ENCODE measurements at regions of chr5 and their contacts with region 1.

Region 1: DNA sequence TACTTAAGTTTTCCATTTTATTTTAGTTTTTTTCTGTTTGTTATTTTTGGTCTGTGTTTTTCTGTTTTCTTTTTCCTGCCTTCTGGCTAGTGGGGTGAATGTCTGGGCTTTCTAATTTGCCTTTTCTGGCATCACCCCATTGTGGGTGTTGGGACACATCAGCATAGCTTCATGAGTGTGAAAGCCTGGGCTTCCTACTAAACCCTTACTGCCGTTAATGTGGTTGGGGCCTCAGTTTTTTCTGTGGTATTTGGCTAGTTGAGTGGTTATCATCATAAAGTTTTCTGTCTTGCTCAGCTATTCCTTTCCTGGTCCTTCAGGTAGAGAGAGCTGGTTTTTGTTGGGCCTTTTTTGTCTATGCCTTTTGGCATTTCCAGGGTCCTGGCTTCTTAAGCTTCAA is 21.4 kb downstream of the C5orf47 start:
- DNase-seq: no peak
- H3K4me3 ChIP-seq: no peak overlapping the region
- H3K27ac ChIP-seq: no peak overlapping the region
- H3K4me1 ChIP-seq: no peaks in the 10 kb centered on the region; the same call in 1 of the 2 replicates
- H3K27me3 ChIP-seq: peaks cover 63% of the 10 kb centered on the region
- CTCF ChIP-seq: no peak

Region 2: GRCh38 chr5:173094012-173094661 is 916.2 kb before region 1 on chr5:
- CTCF ChIA-PET with region 1: no interaction called
- POLR2A ChIA-PET with region 1: interaction called, 14 read pairs
- intact Hi-C with region 1: no loop called
- DNase-seq: peak in 1 of 2 experiments; percentile 76
- H3K4me3 ChIP-seq: no peak overlapping the region
- H3K27ac ChIP-seq: no peak overlapping the region
- H3K4me1 ChIP-seq: peaks cover 15% of the 10 kb centered on the region
- H3K27me3 ChIP-seq: no peaks in the 10 kb centered on the region
- CTCF ChIP-seq: no peak

Measured in PC-9 (cell line).